GM12878 (cell line): ENCODE measurements at regions of chr7 and their contacts with region 1.

Region 1: GRCh38 chr7:19754521-19755116 is 18.8 kb downstream of the TMEM196 start:
- DNase-seq: peak; percentile 15
- ATAC-seq: peak; percentile 63
- H3K4me3 ChIP-seq: no peak overlapping the region
- H3K27ac ChIP-seq: no peak overlapping the region
- H3K4me1 ChIP-seq: no peaks in the 10 kb centered on the region
- H3K27me3 ChIP-seq: no peaks in the 10 kb centered on the region
- CTCF ChIP-seq: peak; percentile 58 to 68 (median 64)
- EP300 ChIP-seq: no peak
- POLR2A ChIP-seq: no peak
- RAD21 ChIP-seq: peak; percentile 63

Region 2: GRCh38 chr7:19713676-19714075 is 40.9 kb before region 1 on chr7:
- CTCF ChIA-PET with region 1: interaction called, 21 read pairs
- POLR2A ChIA-PET with region 1: no interaction called
- RAD21 ChIA-PET with region 1: interaction called, 10 read pairs
- SMC1A ChIA-PET with region 1: interaction called, 4 read pairs
- in situ Hi-C with region 1: no loop called
- intact Hi-C with region 1: no loop called
- DNase-seq: peak; percentile 8
- ATAC-seq: peak; percentile 38
- H3K4me3 ChIP-seq: no peak overlapping the region
- H3K27ac ChIP-seq: no peak overlapping the region
- H3K4me1 ChIP-seq: no peaks in the 10 kb centered on the region
- H3K27me3 ChIP-seq: no peaks in the 10 kb centered on the region; a peak in 1 of 4 replicates
- CTCF ChIP-seq: peak; percentile 46 to 59 (median 49); a peak in 5 of 6 replicates
- EP300 ChIP-seq: no peak
- POLR2A ChIP-seq: no peak
- RAD21 ChIP-seq: peak; percentile 48; the same call in 1 of the 2 replicates

Region 3: DNA sequence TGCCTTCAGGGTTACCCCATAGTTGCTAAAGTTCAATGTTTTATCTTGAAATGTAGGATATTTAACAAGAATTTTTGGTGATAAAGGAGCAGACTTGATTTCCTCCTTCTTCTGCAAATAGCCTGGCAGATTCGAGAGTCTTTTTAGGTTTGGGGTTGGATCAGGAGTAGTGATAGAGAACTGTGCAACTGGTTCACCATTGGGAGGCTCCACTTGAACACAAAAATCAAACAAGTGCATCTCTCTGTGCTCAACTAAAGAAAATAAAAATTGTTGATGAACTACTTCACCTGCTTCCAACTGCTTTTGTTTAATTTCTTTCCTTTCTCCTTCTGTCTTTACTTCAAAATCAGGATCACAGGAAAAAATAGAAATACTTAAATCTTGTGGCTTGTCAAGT is 404.1 kb after region 1 on chr7:
- CTCF ChIA-PET with region 1: interaction called, 4 read pairs
- POLR2A ChIA-PET with region 1: no interaction called
- RAD21 ChIA-PET with region 1: no interaction called
- SMC1A ChIA-PET with region 1: interaction called, 3 read pairs
- in situ Hi-C with region 1: loop called (anchors 10 kb)
- intact Hi-C with region 1: no loop called
- DNase-seq: no peak
- ATAC-seq: peak; percentile 77
- H3K4me3 ChIP-seq: no peak overlapping the region
- H3K27ac ChIP-seq: no peak overlapping the region
- H3K4me1 ChIP-seq: no peaks in the 10 kb centered on the region
- H3K27me3 ChIP-seq: no peaks in the 10 kb centered on the region
- CTCF ChIP-seq: peak; percentile 43 to 54 (median 48); a peak in 5 of 6 replicates
- EP300 ChIP-seq: no peak
- POLR2A ChIP-seq: no peak
- RAD21 ChIP-seq: peak; percentile 73

Region 4: GRCh38 chr7:20591058-20591457 is 836.4 kb after region 1 on chr7:
- CTCF ChIA-PET with region 1: interaction called, 25 read pairs
- POLR2A ChIA-PET with region 1: no interaction called
- RAD21 ChIA-PET with region 1: interaction called, 4 read pairs
- SMC1A ChIA-PET with region 1: interaction called, 3 read pairs
- in situ Hi-C with region 1: loop called (anchors 5 kb)
- intact Hi-C with region 1: no loop called
- DNase-seq: no peak
- ATAC-seq: no peak
- H3K4me3 ChIP-seq: no peak overlapping the region
- H3K27ac ChIP-seq: no peak overlapping the region
- H3K4me1 ChIP-seq: no peaks in the 10 kb centered on the region
- H3K27me3 ChIP-seq: no peaks in the 10 kb centered on the region
- CTCF ChIP-seq: no peak
- EP300 ChIP-seq: no peak
- POLR2A ChIP-seq: no peak
- RAD21 ChIP-seq: no peak